Heart right ventricle (tissue), 16 donors: ENCODE measurements at regions of chr4 and their contacts with region 1.

Region 1: GRCh38 chr4:148944136-148944838 is 502.1 kb upstream of the NR3C2 start:
- DNase-seq: no peak
- ATAC-seq: no peak
- H3K4me3 ChIP-seq: no peak overlapping the region
- H3K27ac ChIP-seq: no peak overlapping the region
- H3K4me1 ChIP-seq: no peaks in the 10 kb centered on the region
- H3K27me3 ChIP-seq: no peaks in the 10 kb centered on the region
- CTCF ChIP-seq: no peak

Region 2: GRCh38 chr4:148634486-148634885 is 309.8 kb before region 1 on chr4:
- intact Hi-C with region 1: loop called in 1 of 10 experiments (anchors 10 kb)
- DNase-seq: no peak
- ATAC-seq: no peak
- H3K4me3 ChIP-seq: no peak overlapping the region
- H3K27ac ChIP-seq: no peak overlapping the region
- H3K4me1 ChIP-seq: no peaks in the 10 kb centered on the region
- H3K27me3 ChIP-seq: no peaks in the 10 kb centered on the region
- CTCF ChIP-seq: no peak

Region 3: DNA sequence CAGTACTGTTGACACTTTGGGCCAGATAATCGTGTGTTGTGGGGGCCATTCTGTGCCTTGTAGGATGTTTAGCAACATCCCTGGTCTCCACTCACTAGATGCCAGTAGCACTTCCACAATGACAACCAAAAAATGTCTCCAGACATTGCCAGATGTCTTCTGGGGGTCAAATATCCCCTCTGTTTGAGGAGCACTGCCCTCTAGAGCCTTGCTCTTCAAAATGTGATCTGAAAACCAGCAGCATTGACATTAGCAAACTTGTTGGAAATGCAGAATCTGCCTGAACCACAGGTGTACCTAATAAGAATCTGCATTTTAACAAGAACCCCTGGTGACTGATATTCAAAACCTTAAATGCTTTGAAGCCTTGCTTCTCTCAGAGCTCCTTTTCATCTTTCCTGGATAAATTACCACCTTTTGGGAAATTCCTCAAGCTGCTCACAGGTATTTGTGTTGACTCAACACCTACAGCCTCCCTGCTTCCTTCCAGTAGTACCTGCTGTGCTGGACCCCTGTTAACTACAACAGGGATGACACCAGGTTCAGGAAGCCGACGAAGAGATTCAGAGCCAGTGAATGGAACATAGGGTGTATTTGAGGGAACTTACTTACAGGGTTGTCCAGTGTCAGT is 43.1 kb before region 1 on chr4:
- intact Hi-C with region 1: no loop called
- DNase-seq: no peak
- ATAC-seq: no peak
- H3K4me3 ChIP-seq: no peak overlapping the region
- H3K27ac ChIP-seq: no peak overlapping the region
- H3K4me1 ChIP-seq: no peaks in the 10 kb centered on the region
- H3K27me3 ChIP-seq: no peaks in the 10 kb centered on the region
- CTCF ChIP-seq: no peak

Region 4: GRCh38 chr4:150421612-150422011 is 1477.3 kb after region 1 on chr4:
- intact Hi-C with region 1: loop called in 1 of 10 experiments (anchors 5 kb)
- DNase-seq: no peak
- ATAC-seq: no peak
- H3K4me3 ChIP-seq: no peak overlapping the region
- H3K27ac ChIP-seq: no peak overlapping the region
- H3K4me1 ChIP-seq: no peaks in the 10 kb centered on the region
- H3K27me3 ChIP-seq: no peaks in the 10 kb centered on the region
- CTCF ChIP-seq: no peak